HEK293 (cell line): ENCODE measurements at regions of chr2 and their contacts with region 1.

Region 1: DNA sequence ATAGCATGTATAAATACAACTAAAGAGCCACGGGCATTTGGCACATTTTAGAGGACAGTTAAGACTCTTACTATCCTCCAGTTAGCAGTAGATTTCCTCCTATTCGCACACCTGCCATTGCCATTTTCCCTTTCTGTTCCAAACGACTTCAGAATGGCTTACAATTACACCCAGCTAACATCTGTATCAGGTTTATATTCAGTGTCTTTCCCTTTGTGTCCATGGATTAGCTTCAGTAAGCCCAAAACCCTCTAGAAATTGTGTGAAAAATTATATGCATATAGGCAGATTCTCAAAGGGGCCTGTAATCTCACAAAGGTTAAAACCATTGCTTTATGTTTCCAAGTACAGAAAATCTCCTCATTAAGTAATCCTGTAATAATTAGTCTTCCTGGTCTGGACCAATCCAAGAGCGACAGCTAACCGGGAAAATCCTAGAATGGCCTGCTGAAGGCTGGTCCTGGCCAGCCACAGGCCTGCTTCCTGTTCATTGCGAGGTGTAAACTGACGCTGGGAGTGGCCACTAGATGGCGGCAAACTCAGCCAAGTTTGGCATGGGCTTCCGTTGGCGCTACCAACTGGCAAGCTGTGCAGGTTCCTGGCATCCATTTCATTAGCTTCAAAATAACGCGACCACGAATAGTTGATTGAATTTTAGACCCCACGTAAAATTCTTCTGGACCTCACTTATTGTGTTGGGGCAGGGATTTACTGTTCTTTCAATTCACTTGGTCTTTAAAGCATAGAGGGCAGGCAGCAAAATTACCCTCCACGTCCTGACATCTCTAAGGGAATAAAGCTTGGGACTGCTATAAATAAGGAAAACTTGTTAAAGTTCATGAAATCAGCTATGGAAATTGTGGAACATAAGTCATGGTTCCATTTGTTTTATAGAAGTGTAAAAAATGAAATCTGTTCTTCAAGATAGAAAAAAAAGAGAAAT is 17.1 kb downstream of the ARHGAP25 start:
- H3K4me3 ChIP-seq: no peak overlapping the region
- H3K27ac ChIP-seq: no peak overlapping the region
- H3K4me1 ChIP-seq: no peaks in the 10 kb centered on the region
- CTCF ChIP-seq: peak; percentile 72

Region 2: GRCh38 chr2:68463287-68463877 is 288.3 kb before region 1 on chr2:
- CTCF ChIA-PET with region 1: interaction called, 20 read pairs
- POLR2A ChIA-PET with region 1: interaction called, 3 read pairs
- H3K4me3 ChIP-seq: no peak overlapping the region
- H3K27ac ChIP-seq: no peak overlapping the region
- H3K4me1 ChIP-seq: peaks cover 4% of the 10 kb centered on the region; the same call in 1 of the 2 replicates
- CTCF ChIP-seq: peak; percentile 17; the same call in 1 of the 2 replicates

Region 3: GRCh38 chr2:68715353-68716041 is 36.2 kb before region 1 on chr2:
- CTCF ChIA-PET with region 1: interaction called, 17 read pairs
- POLR2A ChIA-PET with region 1: no interaction called
- H3K4me3 ChIP-seq: no peak overlapping the region
- H3K27ac ChIP-seq: no peak overlapping the region
- H3K4me1 ChIP-seq: no peaks in the 10 kb centered on the region
- CTCF ChIP-seq: peak; percentile 26; the same call in 1 of the 2 replicates

Region 4: GRCh38 chr2:68787356-68787755 is 35.7 kb after region 1 on chr2:
- CTCF ChIA-PET with region 1: interaction called, 11 read pairs
- POLR2A ChIA-PET with region 1: no interaction called
- H3K4me3 ChIP-seq: no peak overlapping the region
- H3K27ac ChIP-seq: no peak overlapping the region
- H3K4me1 ChIP-seq: no peaks in the 10 kb centered on the region
- CTCF ChIP-seq: no peak

Region 5: DNA sequence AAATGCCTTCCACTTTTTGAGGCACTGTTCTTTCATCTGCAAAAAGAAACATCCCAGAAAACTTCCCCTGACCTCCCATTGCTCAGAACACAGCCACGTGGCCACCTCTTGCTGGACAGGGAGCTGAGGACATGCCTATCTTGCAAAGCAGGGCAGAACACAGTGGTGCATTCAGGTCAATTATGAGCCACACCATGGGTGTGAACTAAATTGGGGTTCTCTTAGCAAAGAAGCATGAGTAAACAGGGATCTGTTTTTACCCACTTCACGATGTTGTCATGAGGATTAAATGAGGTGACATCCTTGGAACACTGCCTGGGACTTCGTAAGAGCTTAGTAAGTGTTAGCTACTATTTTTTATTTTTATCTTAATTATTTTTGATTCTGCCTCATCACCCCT is 94.4 kb after region 1 on chr2:
- CTCF ChIA-PET with region 1: interaction called, 130 read pairs
- POLR2A ChIA-PET with region 1: no interaction called
- H3K4me3 ChIP-seq: no peak overlapping the region
- H3K27ac ChIP-seq: no peak overlapping the region
- H3K4me1 ChIP-seq: no peaks in the 10 kb centered on the region
- CTCF ChIP-seq: no peak

Region 6: DNA sequence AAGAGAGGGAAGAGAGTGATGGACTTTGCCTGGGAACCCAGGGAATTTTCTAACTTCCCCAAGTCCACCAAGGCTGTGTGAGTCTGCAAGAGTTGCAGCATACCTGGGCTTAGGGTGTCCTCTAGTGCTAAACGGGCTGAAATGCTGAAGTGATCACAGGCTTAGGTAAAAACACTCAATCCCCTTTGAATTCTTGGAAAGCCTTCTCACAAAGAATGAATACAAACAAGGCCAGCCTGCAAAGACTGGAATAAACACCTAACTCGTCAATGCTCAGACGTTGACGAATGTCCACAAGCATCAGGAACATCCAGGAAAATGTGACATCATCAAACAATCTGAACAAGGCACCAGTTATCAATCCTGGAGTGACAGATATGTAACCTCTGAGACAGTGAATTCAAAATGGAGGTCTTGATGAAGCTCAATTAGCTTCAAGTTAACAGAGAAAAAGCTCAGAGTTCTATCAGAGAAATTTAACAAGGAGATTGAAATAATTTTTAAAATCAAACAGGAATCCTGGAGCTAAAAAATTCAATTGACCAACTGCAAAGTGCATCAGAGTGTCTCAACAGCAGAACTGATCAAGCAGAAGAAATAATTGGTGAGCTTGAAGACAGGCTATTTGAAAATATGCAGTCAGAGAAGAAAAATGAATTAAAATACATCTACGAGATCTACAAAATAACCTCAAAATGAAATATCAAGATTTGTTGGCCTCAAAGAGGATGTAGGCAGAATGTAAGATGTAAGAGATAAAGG is 149.7 kb after region 1 on chr2:
- CTCF ChIA-PET with region 1: interaction called, 21 read pairs
- POLR2A ChIA-PET with region 1: no interaction called
- H3K4me3 ChIP-seq: no peak overlapping the region
- H3K27ac ChIP-seq: no peak overlapping the region
- H3K4me1 ChIP-seq: no peaks in the 10 kb centered on the region
- CTCF ChIP-seq: peak; percentile 52

Region 7: GRCh38 chr2:68918497-68918896 is 166.8 kb after region 1 on chr2:
- CTCF ChIA-PET with region 1: interaction called, 18 read pairs
- POLR2A ChIA-PET with region 1: no interaction called
- H3K4me3 ChIP-seq: no peak overlapping the region
- H3K27ac ChIP-seq: no peak overlapping the region
- H3K4me1 ChIP-seq: no peaks in the 10 kb centered on the region
- CTCF ChIP-seq: no peak

Region 8: DNA sequence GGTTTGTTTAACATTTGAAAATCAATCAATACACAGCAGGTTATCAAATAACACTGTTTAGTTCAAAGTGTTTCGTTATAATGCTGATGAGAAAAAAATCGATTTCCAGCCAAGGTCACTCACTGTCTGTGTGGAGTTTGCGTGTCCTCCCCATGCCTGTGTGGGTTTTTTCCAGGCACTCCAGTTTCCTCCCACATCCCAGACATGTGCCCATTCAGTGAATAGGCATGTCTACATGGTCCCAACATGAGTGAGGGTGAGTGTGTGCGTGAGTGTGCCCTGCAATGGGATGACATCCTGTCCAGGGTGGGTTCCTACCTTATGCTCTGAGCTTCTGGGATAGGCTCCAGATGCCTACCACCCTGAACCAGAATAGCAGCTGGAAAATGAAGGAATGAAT is 209.7 kb after region 1 on chr2:
- CTCF ChIA-PET with region 1: no interaction called
- POLR2A ChIA-PET with region 1: no interaction called
- H3K4me3 ChIP-seq: no peak overlapping the region
- H3K27ac ChIP-seq: no peak overlapping the region
- H3K4me1 ChIP-seq: no peaks in the 10 kb centered on the region
- CTCF ChIP-seq: no peak

Region 9: GRCh38 chr2:69095305-69095704 is 343.6 kb after region 1 on chr2:
- CTCF ChIA-PET with region 1: no interaction called
- POLR2A ChIA-PET with region 1: no interaction called
- H3K4me3 ChIP-seq: no peak overlapping the region
- H3K27ac ChIP-seq: no peak overlapping the region
- H3K4me1 ChIP-seq: no peaks in the 10 kb centered on the region
- CTCF ChIP-seq: no peak